MCF 10A (cell line): ENCODE measurements at regions of chr16 and their contacts with region 1.

Region 1: GRCh38 chr16:12803203-12804097 is at the start of gene CPPED1:
- DNase-seq: peak; percentile 93
- H3K4me3 Mint-ChIP-seq: peak within 1 kb of the TSS; percentile 92
- H3K27ac Mint-ChIP-seq: peak within 1 kb of the TSS; percentile 79
- H3K4me1 Mint-ChIP-seq: no peaks in the 10 kb centered on the region
- H3K27me3 Mint-ChIP-seq: no peaks in the 10 kb centered on the region
- CTCF ChIP-seq: no peak
- total RNA-seq, gene CPPED1: 13.8 and 16.6 TPM in 2 replicates

Region 2: DNA sequence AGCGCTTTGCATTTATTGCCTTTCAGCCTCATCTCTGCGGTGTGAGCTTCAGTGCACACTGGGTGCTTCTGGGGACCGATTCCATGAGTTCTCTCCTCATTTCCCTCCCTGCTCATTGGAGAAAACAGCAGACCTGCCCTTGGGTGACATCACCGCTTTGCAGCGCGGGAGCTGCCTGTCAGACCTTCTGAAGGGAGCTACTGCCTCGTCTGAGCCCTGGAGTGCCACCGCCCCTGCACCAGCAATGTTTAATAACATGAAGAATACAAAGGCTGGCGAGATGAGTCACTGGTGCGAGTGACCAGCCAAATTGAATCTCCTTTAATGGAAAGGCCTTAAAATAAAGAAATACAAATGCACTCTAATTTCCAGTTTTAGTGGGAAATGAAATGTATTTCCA is 30.5 kb after region 1 on chr16:
- CTCF ChIA-PET with region 1: no interaction called
- POLR2A ChIA-PET with region 1: interaction called, 10 read pairs
- intact Hi-C with region 1: no loop called
- DNase-seq: peak; percentile 73
- H3K4me3 Mint-ChIP-seq: peak overlapping the region; percentile 31
- H3K27ac Mint-ChIP-seq: peak overlapping the region; percentile 66
- H3K4me1 Mint-ChIP-seq: peaks cover 10% of the 10 kb centered on the region
- H3K27me3 Mint-ChIP-seq: no peaks in the 10 kb centered on the region
- CTCF ChIP-seq: no peak